ENCODE measurements at regions of chr10 and their contacts with region 1.

Region 1: GRCh38 chr10:15209827-15210509 is 41.5 kb upstream of the NMT2 start:
- DNase-seq: peak; percentile 92
- H3K4me3 Mint-ChIP-seq: no peak overlapping the region
- H3K27ac Mint-ChIP-seq: no peak overlapping the region
- H3K4me1 Mint-ChIP-seq: peaks cover 53% of the 10 kb centered on the region
- H3K27me3 Mint-ChIP-seq: no peaks in the 10 kb centered on the region

Region 2: GRCh38 chr10:14959276-14960057 is 250.5 kb before region 1 on chr10 and contains the start of gene MEIG1:
- CTCF ChIA-PET with region 1: no interaction called
- intact Hi-C with region 1: loop called (anchors 1 kb)
- DNase-seq: peak; percentile 91
- H3K4me3 Mint-ChIP-seq: peak within 1 kb of the TSS; percentile 98
- H3K27ac Mint-ChIP-seq: peak within 1 kb of the TSS; percentile 98
- H3K4me1 Mint-ChIP-seq: peaks cover 27% of the 10 kb centered on the region
- H3K27me3 Mint-ChIP-seq: no peaks in the 10 kb centered on the region
- total RNA-seq, gene MEIG1: 0.81 to 0.93 TPM

Region 3: DNA sequence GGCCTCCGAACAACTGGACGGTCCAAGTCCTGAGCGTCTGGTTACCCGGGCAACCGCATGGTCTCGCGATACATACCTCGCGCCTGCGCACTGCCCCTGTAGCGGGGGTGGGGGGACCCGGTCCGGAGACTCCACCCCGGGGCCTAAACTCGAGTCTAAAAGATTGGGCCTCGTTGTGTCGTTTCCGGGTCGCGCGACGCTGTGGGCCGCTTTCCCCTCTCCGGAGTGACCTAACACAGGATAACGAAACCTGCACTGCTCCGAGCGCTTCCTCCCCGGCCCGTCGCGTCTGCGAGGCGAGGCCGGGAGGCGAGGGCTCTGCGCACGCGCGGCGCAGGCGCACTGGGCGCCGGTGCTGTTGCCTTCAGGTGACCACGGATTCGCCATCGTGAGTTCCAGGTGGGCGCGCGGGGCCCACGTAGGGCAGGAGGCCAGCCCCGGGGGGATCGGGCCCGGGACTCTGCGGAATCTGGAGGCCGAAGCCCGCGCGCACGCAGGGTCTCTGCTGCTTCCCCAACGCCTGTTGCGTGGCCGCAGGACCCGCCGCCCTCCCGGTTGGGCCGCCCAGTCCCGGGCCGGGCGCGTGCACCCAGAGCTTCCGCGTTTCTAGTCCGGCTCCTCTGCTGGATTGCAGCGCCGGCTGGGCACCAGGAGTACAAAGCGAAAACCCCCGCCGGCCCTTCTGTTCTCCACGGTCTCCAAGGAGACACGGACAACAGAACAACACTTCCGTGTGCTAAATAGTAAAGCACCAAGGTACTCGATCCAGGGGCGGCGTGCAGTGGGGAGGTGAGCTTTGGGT is 112.8 kb before region 1 on chr10 and contains the start of gene RPP38:
- CTCF ChIA-PET with region 1: no interaction called
- intact Hi-C with region 1: loop called (anchors 1 kb)
- DNase-seq: peak; percentile 96
- H3K4me3 Mint-ChIP-seq: peak within 1 kb of the TSS; percentile 97
- H3K27ac Mint-ChIP-seq: peak within 1 kb of the TSS; percentile 94
- H3K4me1 Mint-ChIP-seq: peaks cover 36% of the 10 kb centered on the region
- H3K27me3 Mint-ChIP-seq: no peaks in the 10 kb centered on the region
- total RNA-seq, gene RPP38: 15.6 to 16.3 TPM

Region 4: DNA sequence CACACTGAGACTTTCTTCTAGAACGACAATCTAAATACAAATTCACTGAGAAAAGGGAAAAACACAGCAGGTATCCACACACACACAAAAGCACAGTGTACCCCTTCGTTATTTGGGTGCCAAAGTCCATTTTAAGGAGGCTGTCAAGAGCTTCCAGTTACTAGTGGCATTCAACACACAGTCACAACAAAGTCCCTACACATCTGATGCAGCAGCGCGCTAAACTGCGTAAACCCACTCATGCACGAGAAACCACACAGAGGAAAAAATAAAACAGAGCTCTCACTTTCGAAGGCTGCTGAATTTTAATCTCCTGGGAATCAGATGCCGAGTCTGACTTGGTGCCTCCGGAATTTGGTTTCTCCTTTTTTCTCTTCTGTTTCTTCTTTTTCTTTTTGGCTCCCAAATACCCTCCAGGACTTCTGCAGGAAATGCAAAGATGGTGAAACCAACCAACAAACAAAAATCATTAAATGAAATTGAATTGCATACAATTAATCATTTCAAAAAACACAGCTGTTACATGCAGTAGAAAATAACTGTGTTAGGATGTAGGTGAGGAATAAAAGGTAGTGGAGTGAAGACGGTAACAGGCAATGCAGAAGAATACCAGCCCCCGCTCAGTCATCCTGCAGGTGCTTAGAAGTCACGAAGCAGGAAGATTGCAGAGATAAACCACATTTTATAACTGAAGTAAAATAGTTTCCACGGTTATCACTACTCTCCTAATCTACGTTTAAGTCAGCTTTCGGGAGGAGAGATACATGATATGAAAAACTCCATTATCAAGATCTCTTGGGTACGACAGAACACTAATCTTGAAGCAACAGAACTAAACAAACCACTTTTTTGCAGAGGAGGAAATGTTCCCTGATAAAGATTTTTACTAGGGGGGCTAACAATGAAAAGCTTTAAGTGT is 68.6 kb before region 1 on chr10:
- CTCF ChIA-PET with region 1: interaction called, 3 read pairs
- intact Hi-C with region 1: loop called (anchors 1 kb)
- DNase-seq: peak; percentile 59
- H3K4me3 Mint-ChIP-seq: peak overlapping the region; percentile 67
- H3K27ac Mint-ChIP-seq: peak overlapping the region; percentile 25
- H3K4me1 Mint-ChIP-seq: peaks cover 38% of the 10 kb centered on the region
- H3K27me3 Mint-ChIP-seq: no peaks in the 10 kb centered on the region

Region 5: GRCh38 chr10:15197911-15198310 is 12.1 kb before region 1 on chr10:
- CTCF ChIA-PET with region 1: interaction called, 9 read pairs
- intact Hi-C with region 1: loop called (anchors 1 kb)
- DNase-seq: no peak
- H3K4me3 Mint-ChIP-seq: no peak overlapping the region
- H3K27ac Mint-ChIP-seq: no peak overlapping the region
- H3K4me1 Mint-ChIP-seq: peaks cover 35% of the 10 kb centered on the region
- H3K27me3 Mint-ChIP-seq: no peaks in the 10 kb centered on the region